Calu3 (cell line): ENCODE measurements at regions of chr16 and their contacts with region 1.

Region 1: DNA sequence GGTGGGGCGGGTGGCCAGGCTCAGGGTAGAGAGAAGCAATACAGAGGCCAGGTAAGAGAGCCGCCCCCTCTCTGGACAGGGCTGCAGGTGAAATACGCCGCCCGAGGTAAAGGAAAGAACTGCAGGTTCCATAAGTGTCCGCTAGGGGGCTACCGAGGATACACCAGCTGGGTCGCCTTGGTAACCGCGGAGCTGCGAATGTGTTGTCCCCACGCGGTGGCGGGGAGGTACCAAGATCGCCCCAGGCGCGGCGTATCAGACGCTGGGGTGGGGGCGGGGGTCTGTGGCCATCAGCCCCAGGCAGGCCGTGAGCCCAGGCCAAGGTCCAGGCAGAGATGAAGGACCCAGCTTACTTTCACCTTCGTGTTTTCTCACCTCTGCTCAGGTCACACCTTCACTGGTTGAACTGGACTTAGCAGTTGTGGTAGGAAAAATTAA is 18.4 kb upstream of the ZFP90 start:
- DNase-seq: peak; percentile 96
- H3K4me3 Mint-ChIP-seq: peak overlapping the region; percentile 47
- H3K27ac Mint-ChIP-seq: no peak overlapping the region
- H3K4me1 Mint-ChIP-seq: peaks cover 11% of the 10 kb centered on the region
- H3K27me3 Mint-ChIP-seq: peaks cover 8% of the 10 kb centered on the region
- CTCF ChIP-seq: peak; percentile 100

Region 2: GRCh38 chr16:68448360-68448970 is 72.2 kb before region 1 on chr16 and contains the start of gene SMPD3:
- CTCF ChIA-PET with region 1: interaction called, 3 read pairs
- intact Hi-C with region 1: loop called (anchors 10 kb)
- DNase-seq: peak; percentile 100
- H3K4me3 Mint-ChIP-seq: peak within 1 kb of the TSS; percentile 71
- H3K27ac Mint-ChIP-seq: peak within 1 kb of the TSS; percentile 33
- H3K4me1 Mint-ChIP-seq: peaks cover 16% of the 10 kb centered on the region
- H3K27me3 Mint-ChIP-seq: peaks cover 52% of the 10 kb centered on the region
- CTCF ChIP-seq: no peak
- total RNA-seq, gene SMPD3: 0.42 and 1.2 TPM in 2 replicates